Activated CD8-positive, alpha-beta T cell treated with anti-CD3 and anti-CD28 coated beads, Interleukin-2, amount 10 ng/mL, durations not matched to agents 7 days and 5 days (primary cell): ENCODE measurements at regions of chr17 and their contacts with region 1.

Region 1: DNA sequence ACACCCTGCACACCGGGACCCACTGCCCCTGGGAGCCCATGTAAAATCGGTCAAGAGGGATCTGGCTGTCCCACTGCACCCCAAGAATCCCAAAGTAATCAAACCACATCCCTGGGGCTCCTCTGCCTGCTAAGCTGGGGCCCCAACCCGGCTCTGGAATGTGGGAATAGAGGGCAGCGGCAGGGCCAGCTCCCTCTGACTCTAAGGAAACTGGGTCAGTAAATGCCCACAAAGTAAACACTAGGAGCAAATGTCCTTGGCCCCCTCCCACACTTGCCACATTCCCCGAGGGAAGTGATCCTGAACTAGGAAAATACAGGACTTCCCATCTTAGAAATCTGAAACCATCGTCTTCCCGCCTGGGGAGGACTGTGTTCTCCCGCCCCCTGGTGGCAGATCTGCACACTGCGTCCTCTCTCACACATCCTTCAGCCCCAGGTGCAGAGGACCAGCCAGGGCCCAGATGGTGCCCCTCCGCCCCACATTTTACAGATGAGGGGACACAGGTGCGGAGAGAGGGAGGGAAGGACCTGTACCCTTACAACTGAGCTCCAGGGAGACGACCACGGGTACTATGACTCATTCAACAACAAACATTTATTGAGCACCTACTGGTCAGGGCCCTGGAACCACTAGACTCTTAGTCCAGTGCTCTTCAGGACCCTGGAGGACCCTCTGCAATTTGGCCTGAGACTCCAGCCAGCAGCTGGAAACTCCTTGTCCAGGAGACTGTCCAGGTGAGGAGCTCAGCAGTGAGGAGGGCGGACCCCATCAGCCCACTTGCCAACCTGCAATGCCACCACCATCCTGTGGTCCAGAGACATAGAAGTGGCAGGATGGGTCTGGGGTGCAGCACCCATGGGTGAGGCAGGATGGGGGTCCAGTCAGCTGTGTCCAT is 10.1 kb downstream of the P3H4 start:
- DNase-seq: peak; percentile 82
- ATAC-seq: peak; percentile 84
- H3K4me3 Mint-ChIP-seq: no peak overlapping the region
- H3K27ac Mint-ChIP-seq: no peak overlapping the region
- H3K4me1 Mint-ChIP-seq: peaks cover 5% of the 10 kb centered on the region
- H3K27me3 Mint-ChIP-seq: no peaks in the 10 kb centered on the region

Region 2: GRCh38 chr17:41730479-41730878 is 71.1 kb before region 1 on chr17:
- CTCF ChIA-PET with region 1: interaction called, 37 read pairs
- POLR2A ChIA-PET with region 1: no interaction called
- DNase-seq: no peak
- ATAC-seq: no peak
- H3K4me3 Mint-ChIP-seq: no peak overlapping the region
- H3K27ac Mint-ChIP-seq: no peak overlapping the region
- H3K4me1 Mint-ChIP-seq: peaks cover 9% of the 10 kb centered on the region
- H3K27me3 Mint-ChIP-seq: peaks cover 42% of the 10 kb centered on the region

Region 3: GRCh38 chr17:41738077-41738735 is 63.4 kb before region 1 on chr17:
- CTCF ChIA-PET with region 1: interaction called, 37 read pairs
- POLR2A ChIA-PET with region 1: interaction called, 3 read pairs
- DNase-seq: peak; percentile 86
- ATAC-seq: peak; percentile 94
- H3K4me3 Mint-ChIP-seq: no peak overlapping the region
- H3K27ac Mint-ChIP-seq: peak overlapping the region; percentile 66
- H3K4me1 Mint-ChIP-seq: peaks cover 17% of the 10 kb centered on the region
- H3K27me3 Mint-ChIP-seq: peaks cover 26% of the 10 kb centered on the region

Region 4: DNA sequence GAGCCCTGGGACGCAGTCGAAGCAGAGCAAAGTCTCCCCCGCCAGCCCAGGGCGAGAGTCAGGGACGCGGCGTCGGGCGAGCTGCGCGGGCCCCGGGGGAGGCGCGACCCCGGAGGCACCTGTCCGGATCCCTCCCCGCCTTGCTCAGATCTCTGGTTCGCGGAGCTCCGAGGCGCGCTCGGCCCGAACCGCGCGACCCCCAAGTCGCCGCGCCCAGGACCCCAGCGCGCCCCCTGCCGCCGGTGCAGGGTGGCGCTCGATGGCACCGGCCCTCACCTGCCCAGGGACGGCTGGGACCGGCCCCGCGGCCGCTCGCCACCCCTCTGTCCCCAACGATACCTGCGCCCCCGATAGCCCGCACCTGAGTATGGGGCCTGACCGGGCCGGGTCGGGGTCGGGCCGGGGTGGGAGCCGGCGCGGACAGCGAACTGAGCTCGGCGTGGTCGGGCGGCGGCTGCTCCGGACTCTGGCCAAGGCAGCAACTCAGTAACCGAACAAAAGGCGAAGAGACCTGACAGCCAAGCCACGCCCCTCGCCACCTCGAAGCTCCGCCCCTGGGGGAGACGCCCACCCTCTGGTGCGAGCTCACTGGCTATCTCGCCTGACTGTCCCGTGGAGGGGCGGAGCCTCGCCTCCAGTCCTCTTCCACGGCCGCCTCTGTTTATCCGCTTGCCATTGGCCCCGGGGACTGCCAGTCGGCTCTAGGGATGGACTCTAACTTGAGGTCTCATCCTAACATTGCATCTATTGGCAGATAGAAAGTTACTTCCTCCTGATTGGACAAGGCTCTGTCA is 15.2 kb before region 1 on chr17 and contains the start of gene JUP:
- CTCF ChIA-PET with region 1: interaction called, 18 read pairs
- POLR2A ChIA-PET with region 1: no interaction called
- DNase-seq: peak; percentile 90
- ATAC-seq: peak; percentile 94
- H3K4me3 Mint-ChIP-seq: peak within 1 kb of the TSS; percentile 53
- H3K27ac Mint-ChIP-seq: no peak within 1 kb of the TSS
- H3K4me1 Mint-ChIP-seq: peaks cover 40% of the 10 kb centered on the region
- H3K27me3 Mint-ChIP-seq: peaks cover 34% of the 10 kb centered on the region
- total RNA-seq, gene JUP: 5.2 to 6.0 TPM

Region 5: DNA sequence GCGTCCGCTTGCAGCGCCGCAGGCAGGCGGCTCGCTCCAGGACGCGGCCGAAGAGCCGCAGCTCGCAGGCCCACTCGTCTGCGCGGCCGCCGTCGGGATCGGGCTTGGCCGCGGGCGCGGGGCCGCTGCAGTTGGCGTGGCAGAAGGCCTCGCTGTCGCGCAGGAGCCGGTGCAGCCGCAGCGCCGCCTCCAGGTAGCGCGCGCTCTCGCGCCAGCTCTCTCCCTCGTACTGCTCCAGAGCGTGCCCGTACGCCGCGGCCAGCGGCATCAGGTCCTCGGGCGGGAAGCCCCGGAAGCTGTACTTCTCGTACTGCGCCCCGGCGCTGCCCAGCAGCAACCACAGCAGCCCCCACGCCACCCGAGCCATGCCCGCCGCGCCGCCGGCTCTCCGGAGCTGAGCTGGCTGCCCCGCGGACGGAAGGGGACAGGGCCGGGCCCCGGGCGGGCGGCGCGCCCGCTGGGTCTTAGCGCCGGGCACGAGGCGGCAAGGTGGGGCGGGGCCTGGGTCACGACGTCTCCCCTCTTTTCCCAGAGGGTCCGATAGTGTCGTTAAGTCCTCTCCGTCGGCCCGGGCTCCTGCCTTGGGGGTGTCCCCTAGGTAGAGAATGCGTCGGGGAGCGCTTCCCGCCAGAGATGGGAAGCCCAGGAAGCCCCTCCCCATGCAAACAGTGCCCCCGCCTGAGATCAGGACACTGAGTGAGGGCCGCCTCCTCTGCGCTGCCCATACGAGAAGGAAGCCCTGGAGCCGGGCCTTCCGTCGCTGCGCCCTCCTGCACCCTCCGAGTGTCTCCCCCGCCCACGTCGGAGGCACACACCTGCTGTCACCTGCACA is 10.1 kb after region 1 on chr17 and contains the start of gene P3H4:
- CTCF ChIA-PET with region 1: interaction called, 15 read pairs
- POLR2A ChIA-PET with region 1: interaction called, 3 read pairs
- DNase-seq: peak; percentile 80
- ATAC-seq: peak; percentile 94
- H3K4me3 Mint-ChIP-seq: peak within 1 kb of the TSS; percentile 72
- H3K27ac Mint-ChIP-seq: peak within 1 kb of the TSS; percentile 55
- H3K4me1 Mint-ChIP-seq: peaks cover 12% of the 10 kb centered on the region
- H3K27me3 Mint-ChIP-seq: peaks cover 15% of the 10 kb centered on the region
- total RNA-seq, gene P3H4: 2.7 to 3.5 TPM

Region 6: DNA sequence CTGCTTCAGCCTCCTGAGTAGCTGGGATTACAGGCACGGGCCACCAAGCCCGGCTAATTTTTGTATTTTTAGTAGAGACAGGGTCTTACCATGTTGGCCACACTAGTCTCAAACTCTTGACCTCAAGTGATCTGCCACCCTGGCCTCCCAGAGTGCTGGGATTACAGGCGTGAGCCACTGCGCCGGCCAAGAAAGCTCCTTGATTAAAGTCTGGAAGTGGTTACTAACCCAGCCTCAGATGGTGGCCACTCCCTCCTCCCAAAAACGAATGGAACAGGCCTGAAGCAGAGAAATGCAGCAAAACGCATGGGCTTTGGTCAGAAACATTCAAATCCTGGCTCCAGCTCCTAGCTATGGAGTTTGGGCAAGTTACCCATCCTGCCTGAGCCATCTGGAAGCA is 22.5 kb after region 1 on chr17:
- CTCF ChIA-PET with region 1: no interaction called
- POLR2A ChIA-PET with region 1: no interaction called
- DNase-seq: no peak
- ATAC-seq: no peak
- H3K4me3 Mint-ChIP-seq: no peak overlapping the region
- H3K27ac Mint-ChIP-seq: no peak overlapping the region
- H3K4me1 Mint-ChIP-seq: no peaks in the 10 kb centered on the region
- H3K27me3 Mint-ChIP-seq: no peaks in the 10 kb centered on the region